Activated CD8-positive, alpha-beta T cell treated with anti-CD3 and anti-CD28 coated beads for 36 hours (primary cell): ENCODE measurements at regions of chr11 and their contacts with region 1.

Region 1: DNA sequence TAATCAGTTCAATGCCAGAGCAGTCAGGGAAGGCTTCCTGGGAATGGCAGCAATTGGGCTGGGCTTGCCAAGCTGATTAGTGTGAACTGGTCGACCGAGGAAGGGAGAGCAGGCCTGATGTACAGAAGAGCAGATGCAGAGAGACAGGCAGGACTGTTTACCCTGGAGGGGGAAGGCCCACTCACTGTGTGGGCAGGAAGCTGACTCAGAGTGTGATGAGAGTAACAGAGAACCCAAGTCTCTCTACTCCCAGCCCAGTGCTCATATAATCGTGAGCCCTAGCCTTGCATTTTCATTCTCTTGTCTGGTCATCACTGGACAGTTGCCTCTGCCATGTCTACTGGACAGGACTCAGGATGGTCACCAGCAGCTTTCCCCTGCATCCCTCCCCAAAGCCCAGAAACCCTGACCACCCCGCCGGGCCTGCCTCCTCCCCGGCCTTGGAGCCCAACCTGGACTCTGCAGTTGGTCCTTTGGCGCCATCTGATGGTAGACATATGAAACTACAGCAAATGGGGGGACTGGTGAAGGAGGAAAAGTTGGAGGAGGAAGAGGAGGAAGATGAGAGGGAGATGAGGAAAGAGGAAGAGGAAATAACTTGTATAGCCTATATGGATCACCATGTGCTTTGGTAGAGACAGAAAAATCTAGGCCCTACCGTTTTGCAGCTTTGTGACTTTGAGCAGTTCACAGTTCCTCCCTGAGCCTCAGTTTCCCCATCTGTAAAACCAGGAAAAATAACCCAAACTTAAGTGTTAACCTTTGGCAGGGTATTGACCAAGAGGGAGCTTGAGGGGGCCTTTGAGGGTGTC is 43.4 kb upstream of the PRDM11 start:
- DNase-seq: peak; percentile 91
- ATAC-seq: peak; percentile 98
- H3K4me3 Mint-ChIP-seq: peak overlapping the region; percentile 60
- H3K27ac Mint-ChIP-seq: peak overlapping the region; percentile 78
- H3K4me1 Mint-ChIP-seq: peaks cover 13% of the 10 kb centered on the region
- H3K27me3 Mint-ChIP-seq: peaks cover 10% of the 10 kb centered on the region
- CTCF ChIP-seq: peak; percentile 98

Region 2: DNA sequence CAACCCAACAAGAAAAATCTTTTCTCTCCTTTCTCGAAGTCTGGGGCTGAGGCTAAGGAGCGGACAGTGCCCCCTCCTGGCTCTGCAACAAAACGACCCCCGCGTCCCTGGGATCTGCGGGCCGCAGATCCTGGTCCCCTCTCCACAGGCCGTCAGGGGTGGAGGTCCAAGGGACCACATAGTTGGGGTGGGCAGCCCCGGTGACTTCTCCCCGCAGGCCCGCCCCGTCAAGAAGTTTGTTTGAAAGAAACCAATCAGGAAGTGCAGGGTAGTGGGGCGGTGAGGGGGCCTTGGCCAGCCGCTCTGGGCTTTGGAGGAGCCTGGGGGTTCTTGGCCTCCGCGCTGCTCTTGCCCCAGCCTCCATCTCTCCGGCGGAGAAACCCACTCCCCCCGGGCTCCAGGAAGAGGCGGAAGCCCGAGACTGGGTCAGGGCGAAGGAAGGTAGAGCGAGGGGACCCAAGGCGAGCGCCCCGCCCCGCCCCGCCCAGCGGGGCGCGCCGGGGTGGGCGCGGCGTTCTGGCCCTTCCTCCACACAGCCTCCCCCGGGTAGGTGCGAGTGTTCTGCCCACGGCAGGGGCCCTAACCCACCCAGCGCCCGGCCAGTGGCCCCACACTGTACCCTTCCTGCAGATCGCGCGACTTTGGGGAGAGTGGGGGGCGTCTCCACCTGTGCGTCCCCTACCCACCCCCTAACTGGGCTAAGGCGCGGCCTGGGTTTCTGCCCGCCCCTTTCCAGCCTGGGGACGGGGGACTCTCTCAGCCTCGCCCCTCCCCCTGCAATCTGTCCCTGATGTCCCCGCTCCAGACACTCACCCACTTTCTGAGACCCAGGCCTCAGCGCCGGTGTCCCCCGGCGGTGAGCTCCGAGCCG is 153.6 kb before region 1 on chr11:
- CTCF ChIA-PET with region 1: interaction called, 942 read pairs
- POLR2A ChIA-PET with region 1: interaction called, 4 read pairs
- intact Hi-C with region 1: no loop called
- DNase-seq: peak; percentile 44
- ATAC-seq: peak; percentile 35
- H3K4me3 Mint-ChIP-seq: peak overlapping the region; percentile 75
- H3K27ac Mint-ChIP-seq: no peak overlapping the region
- H3K4me1 Mint-ChIP-seq: peaks cover 15% of the 10 kb centered on the region
- H3K27me3 Mint-ChIP-seq: no peaks in the 10 kb centered on the region
- CTCF ChIP-seq: peak; percentile 58

Region 3: DNA sequence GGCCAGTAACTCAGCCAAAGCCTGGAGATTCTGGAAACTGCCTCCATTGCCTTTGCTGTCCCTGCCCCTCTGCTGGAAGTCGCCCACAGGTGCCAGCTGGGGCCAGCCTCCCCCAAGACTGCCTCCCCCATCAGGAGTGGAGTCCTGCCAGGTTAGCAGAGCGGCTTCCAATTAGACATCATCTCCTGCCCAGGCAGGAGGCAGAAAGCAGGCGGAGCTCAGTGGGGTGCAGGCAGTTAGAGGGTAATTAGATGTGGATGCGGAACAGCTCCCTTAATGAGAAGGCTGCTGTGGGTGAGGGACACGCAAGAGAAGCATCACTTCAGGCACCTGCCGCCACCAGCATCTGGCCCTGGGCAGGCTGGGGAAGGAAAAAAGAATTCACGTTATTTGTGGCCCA is 61.4 kb before region 1 on chr11:
- CTCF ChIA-PET with region 1: interaction called, 11 read pairs
- POLR2A ChIA-PET with region 1: no interaction called
- intact Hi-C with region 1: no loop called
- DNase-seq: no peak
- ATAC-seq: no peak
- H3K4me3 Mint-ChIP-seq: no peak overlapping the region
- H3K27ac Mint-ChIP-seq: no peak overlapping the region
- H3K4me1 Mint-ChIP-seq: peaks cover 5% of the 10 kb centered on the region
- H3K27me3 Mint-ChIP-seq: no peaks in the 10 kb centered on the region
- CTCF ChIP-seq: no peak

Region 4: GRCh38 chr11:45079943-45080719 is 22.9 kb before region 1 on chr11:
- CTCF ChIA-PET with region 1: interaction called, 37 read pairs
- POLR2A ChIA-PET with region 1: interaction called, 6 read pairs
- intact Hi-C with region 1: no loop called
- DNase-seq: peak; percentile 76
- ATAC-seq: peak; percentile 83
- H3K4me3 Mint-ChIP-seq: peak overlapping the region; percentile 52
- H3K27ac Mint-ChIP-seq: peak overlapping the region; percentile 93
- H3K4me1 Mint-ChIP-seq: peaks cover 54% of the 10 kb centered on the region
- H3K27me3 Mint-ChIP-seq: no peaks in the 10 kb centered on the region
- CTCF ChIP-seq: no peak